IMR-90 (cell line): ENCODE measurements at regions of chr2 and their contacts with region 1.

Region 1: DNA sequence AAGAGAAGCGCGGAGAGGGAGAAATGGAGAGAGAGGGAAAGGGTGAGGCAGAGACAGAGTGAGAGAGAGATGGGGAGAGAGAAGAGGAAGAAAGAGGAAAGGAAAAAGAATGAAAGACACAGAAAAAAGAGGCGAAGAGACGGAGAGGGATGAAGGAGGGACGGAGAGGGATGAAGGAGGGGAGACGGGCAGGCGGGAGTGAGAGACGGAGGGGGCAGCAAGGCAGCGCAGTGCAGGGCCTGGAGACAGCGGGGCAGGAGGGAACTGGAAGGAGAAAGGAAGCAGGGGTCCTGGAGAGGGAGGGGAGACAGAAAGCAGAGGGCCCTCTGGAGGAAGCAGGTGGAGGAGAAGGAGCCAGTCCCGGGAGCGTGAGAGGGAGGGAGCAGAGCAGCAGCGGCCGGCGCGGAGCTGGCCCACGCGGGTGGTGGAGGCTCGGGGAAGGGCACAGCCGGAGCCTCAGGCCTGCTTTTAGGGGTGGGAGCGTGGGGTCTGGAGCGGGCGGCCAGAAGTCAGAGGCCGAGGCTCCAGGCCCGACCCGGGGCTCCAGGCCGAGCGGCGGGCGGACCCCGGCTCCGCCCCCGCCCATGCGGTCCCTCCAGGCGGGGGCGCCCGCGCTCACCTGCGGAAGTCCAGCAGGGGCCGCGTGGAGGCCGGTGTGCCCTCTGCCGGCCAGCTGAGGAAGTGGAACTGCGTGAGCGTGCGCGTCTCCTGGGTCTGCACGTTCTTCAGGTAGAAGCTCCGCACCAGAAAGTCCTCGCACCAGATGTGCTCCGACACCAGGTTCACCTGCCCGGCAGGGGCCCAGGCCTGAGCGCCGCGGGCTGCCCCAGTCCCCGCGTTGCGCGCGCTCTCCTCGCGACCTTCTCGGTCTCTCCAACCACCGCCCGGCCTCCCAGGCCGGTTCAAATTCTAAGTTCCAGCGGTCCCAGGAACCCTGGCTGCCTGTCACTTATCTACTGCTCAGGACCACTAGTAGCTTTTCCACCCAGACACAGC is 14.5 kb downstream of the PTPRN start:
- DNase-seq: peak; percentile 70
- ATAC-seq: peak; percentile 93
- H3K4me3 ChIP-seq: peak overlapping the region; percentile 40
- H3K27ac ChIP-seq: peak overlapping the region; percentile 40; the same call in 1 of the 2 replicates
- H3K4me1 ChIP-seq: peaks cover 12% of the 10 kb centered on the region
- H3K27me3 ChIP-seq: no peaks in the 10 kb centered on the region
- CTCF ChIP-seq: peak; percentile 99
- POLR2A ChIP-seq: no peak; the same call in 1 of the 2 replicates
- RAD21 ChIP-seq: peak; percentile 80

Region 2: GRCh38 chr2:219057709-219058540 is 236.7 kb before region 1 on chr2:
- CTCF ChIA-PET with region 1: no interaction called
- POLR2A ChIA-PET with region 1: no interaction called
- dilution Hi-C with region 1: no loop called
- in situ Hi-C with region 1: no loop called
- intact Hi-C with region 1: loop called (anchors 5 kb)
- DNase-seq: peak; percentile 56
- ATAC-seq: peak; percentile 97
- H3K4me3 ChIP-seq: no peak overlapping the region
- H3K27ac ChIP-seq: no peak overlapping the region
- H3K4me1 ChIP-seq: peaks cover 6% of the 10 kb centered on the region; the same call in 1 of the 2 replicates
- H3K27me3 ChIP-seq: peaks cover 91% of the 10 kb centered on the region
- CTCF ChIP-seq: peak; percentile 93
- POLR2A ChIP-seq: no peak
- RAD21 ChIP-seq: peak; percentile 96

Region 3: DNA sequence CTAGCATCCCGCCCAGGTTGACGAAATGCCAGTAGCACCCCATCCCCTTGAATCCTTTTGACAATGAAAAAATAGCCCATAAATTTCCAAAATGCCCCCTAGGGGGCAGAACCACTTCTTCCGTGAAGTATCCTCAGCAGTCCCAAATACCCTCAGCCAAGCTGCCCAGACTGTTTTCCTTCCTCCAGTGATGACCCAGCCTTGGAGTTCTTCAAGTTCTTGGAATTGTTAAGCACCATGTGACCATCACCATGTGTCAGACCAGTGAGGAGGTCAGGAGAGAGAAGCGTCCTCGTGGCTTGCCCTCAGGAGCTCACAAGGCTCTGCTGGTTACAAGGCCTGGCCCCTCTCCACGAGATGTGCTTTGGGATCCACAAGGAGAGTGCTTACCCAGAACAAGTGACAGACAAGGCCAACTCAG is 123.4 kb before region 1 on chr2:
- CTCF ChIA-PET with region 1: interaction called, 5 read pairs
- POLR2A ChIA-PET with region 1: no interaction called
- dilution Hi-C with region 1: no loop called
- in situ Hi-C with region 1: loop called (anchors 5 kb)
- intact Hi-C with region 1: loop called (anchors 2 kb)
- DNase-seq: peak; percentile 86
- ATAC-seq: peak; percentile 87
- H3K4me3 ChIP-seq: no peak overlapping the region
- H3K27ac ChIP-seq: peak overlapping the region; percentile 78
- H3K4me1 ChIP-seq: peaks cover 5% of the 10 kb centered on the region; the same call in 1 of the 2 replicates
- H3K27me3 ChIP-seq: no peaks in the 10 kb centered on the region
- CTCF ChIP-seq: peak; percentile 72
- POLR2A ChIP-seq: no peak
- RAD21 ChIP-seq: peak; percentile 56

Region 4: GRCh38 chr2:219229305-219230058 is 65.2 kb before region 1 on chr2 and contains the starts of genes ANKZF1 and ATG9A:
- CTCF ChIA-PET with region 1: interaction called, 8 read pairs
- POLR2A ChIA-PET with region 1: no interaction called
- dilution Hi-C with region 1: no loop called
- in situ Hi-C with region 1: no loop called
- intact Hi-C with region 1: loop called (anchors 1 kb)
- DNase-seq: peak; percentile 98
- ATAC-seq: peak; percentile 99
- H3K4me3 ChIP-seq: peak within 1 kb of the TSS; percentile 79
- H3K27ac ChIP-seq: peak within 1 kb of the TSS; percentile 86
- H3K4me1 ChIP-seq: peaks cover 5% of the 10 kb centered on the region
- H3K27me3 ChIP-seq: no peaks in the 10 kb centered on the region
- CTCF ChIP-seq: no peak
- POLR2A ChIP-seq: peak; percentile 87
- RAD21 ChIP-seq: no peak
- total RNA-seq, gene ANKZF1: 18.3 and 18.6 TPM in 2 replicates
- total RNA-seq, gene ATG9A: 27.8 and 35.1 TPM in 2 replicates

Region 5: DNA sequence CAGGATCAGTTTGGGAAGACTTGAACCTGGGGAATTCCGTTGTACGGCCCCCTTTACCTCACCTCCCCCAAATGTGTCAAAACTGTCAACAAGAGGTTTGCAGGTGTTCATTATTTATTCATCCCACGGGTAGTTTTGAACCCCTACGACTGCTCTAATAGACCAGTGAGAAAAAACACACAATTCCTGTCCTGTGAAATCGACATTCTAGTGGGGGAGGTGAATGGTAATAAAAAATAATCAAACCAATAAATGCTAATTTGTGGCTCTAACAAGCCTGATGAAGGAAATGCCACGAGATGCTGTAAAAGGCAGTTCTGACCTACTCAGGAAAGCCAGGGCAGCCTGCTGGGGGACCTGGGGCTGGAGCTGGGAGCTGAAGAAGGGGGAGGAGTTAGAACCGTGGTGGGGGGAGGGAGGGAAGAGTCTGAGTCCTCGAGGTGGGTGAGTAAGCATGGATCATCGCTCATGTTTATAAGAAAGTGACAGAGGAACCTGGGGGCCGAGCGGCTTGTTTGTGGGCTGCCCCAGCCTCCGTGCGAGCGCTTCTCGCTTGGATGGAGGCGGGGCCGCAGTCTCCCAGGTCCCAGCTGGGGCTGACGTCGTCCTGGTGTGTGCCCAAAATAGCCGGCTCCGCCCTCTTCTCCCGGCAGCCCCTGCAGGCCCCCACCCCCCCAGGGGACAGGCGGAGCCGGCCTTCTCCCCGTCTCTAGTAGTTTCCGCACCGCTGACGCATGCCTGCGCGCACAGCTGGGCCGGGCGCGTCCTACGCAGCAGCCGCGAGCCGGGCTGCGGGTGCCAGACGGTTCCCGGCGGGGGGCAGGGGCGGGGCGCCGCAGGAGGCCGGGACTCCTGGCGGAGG is 15.8 kb before region 1 on chr2 and contains the start of gene DNAJB2:
- CTCF ChIA-PET with region 1: interaction called, 29 read pairs
- POLR2A ChIA-PET with region 1: no interaction called
- dilution Hi-C with region 1: no loop called
- in situ Hi-C with region 1: no loop called
- intact Hi-C with region 1: loop called (anchors 1 kb)
- DNase-seq: peak; percentile 99
- ATAC-seq: peak; percentile 91
- H3K4me3 ChIP-seq: peak within 1 kb of the TSS; percentile 65
- H3K27ac ChIP-seq: peak within 1 kb of the TSS; percentile 82
- H3K4me1 ChIP-seq: peaks cover 18% of the 10 kb centered on the region
- H3K27me3 ChIP-seq: no peaks in the 10 kb centered on the region
- CTCF ChIP-seq: no peak
- POLR2A ChIP-seq: peak; percentile 89
- RAD21 ChIP-seq: peak; percentile 32; the same call in 1 of the 2 replicates
- total RNA-seq, gene DNAJB2: 30.6 and 43.0 TPM in 2 replicates

Region 6: DNA sequence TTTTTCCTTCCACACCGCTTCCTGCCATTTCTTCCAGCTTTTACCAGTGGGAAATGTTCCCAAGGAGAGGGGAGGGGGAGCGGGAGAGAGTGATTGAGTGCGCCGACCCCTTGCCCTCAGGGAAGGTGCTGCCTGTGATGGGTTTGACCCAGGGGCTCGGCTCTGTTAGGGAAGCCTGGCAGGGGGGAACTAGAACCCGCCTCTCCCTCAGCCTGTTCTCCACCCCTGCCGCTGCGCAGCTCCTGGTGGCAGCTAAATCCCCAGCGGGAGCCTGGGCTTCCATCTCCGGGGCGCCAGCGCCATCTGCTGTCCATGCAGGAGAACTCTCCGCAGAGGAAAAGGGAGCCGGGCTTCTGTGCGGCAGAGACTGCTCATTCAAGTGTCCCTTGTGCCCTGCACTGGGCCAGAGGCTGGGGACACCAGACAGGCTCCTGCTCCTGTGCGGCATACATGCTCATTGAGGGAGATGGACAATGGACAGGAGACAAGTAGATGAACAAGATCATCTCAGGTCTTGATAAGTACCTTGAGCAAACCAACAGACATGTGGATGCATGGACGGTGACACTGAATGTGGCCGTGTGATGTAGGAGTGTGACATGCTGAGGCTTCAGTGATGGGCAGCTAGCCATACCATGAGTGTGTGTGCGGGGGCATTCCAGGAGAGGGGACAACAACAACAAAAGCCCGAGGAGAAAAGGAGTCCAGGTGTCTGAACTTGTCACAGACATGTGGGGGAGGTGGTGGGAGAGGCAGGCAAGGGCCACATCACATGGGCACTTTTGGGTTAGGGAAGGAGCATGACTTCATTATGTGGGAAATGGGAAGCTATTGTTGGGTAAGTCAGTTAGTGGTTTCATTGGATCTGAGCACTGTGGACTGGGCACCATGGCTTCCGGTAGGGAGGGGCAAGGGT is 235.7 kb after region 1 on chr2:
- CTCF ChIA-PET with region 1: no interaction called
- POLR2A ChIA-PET with region 1: no interaction called
- dilution Hi-C with region 1: no loop called
- in situ Hi-C with region 1: no loop called
- intact Hi-C with region 1: loop called (anchors 5 kb)
- DNase-seq: peak; percentile 78
- ATAC-seq: peak; percentile 97
- H3K4me3 ChIP-seq: peak overlapping the region; percentile 22; the same call in 1 of the 2 replicates
- H3K27ac ChIP-seq: no peak overlapping the region
- H3K4me1 ChIP-seq: no peaks in the 10 kb centered on the region
- H3K27me3 ChIP-seq: peaks cover 58% of the 10 kb centered on the region
- CTCF ChIP-seq: peak; percentile 99
- POLR2A ChIP-seq: peak; percentile 62
- RAD21 ChIP-seq: peak; percentile 99